Endothelial cell of umbilical vein (primary cell): ENCODE measurements at regions of chr3 and their contacts with region 1.

Region 1: DNA sequence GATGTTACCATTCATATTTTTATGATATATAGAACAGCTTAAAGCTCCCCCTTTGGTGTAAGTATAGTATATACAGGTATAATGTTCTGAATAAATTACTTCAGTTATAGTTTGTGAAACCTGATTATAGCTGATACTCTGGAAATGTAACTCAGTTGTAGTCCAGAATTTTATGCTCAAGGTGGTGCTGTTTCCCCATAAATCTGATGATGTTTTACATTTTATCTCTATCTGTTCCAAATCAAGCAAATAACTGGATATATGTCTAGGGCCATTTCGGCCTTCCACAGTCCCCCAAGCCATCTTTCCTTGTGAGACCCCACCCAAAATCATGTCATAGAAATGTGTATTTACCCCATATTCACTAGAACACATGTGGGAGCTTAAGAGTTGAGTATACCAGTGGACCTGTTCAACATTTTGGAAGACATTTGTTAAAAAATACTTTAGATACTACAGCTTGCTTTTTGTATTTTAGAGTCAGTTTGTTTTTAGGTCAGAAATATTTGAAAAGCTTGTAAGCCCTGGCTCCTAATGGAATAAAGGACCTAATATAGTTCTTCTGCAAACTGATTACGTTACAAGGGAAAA is 107.1 kb downstream of the ATG7 start:
- DNase-seq: peak; percentile 90
- H3K4me3 ChIP-seq: peak overlapping the region in 2 of 3 experiments; percentile 24 to 43
- H3K27ac ChIP-seq: peak overlapping the region; percentile 98
- H3K4me1 ChIP-seq: peaks cover 21% of the 10 kb centered on the region
- H3K27me3 ChIP-seq: no peaks in the 10 kb centered on the region
- CTCF ChIP-seq: peak; percentile 28 to 43
- POLR2A ChIP-seq: no peak

Region 2: GRCh38 chr3:11392014-11392859 is 12.9 kb after region 1 on chr3:
- CTCF ChIA-PET with region 1: interaction called, 21 read pairs
- POLR2A ChIA-PET with region 1: interaction called, 7 read pairs
- dilution Hi-C with region 1: no loop called
- intact Hi-C with region 1: no loop called
- DNase-seq: peak; percentile 42
- H3K4me3 ChIP-seq: no peak overlapping the region
- H3K27ac ChIP-seq: peak overlapping the region; percentile 16
- H3K4me1 ChIP-seq: peaks cover 19% of the 10 kb centered on the region
- H3K27me3 ChIP-seq: no peaks in the 10 kb centered on the region
- CTCF ChIP-seq: no peak
- POLR2A ChIP-seq: no peak

Region 3: GRCh38 chr3:11548721-11549131 is 169.4 kb after region 1 on chr3:
- CTCF ChIA-PET with region 1: interaction called, 19 read pairs
- POLR2A ChIA-PET with region 1: no interaction called
- dilution Hi-C with region 1: no loop called
- intact Hi-C with region 1: loop called (anchors 1 kb)
- DNase-seq: peak; percentile 85
- H3K4me3 ChIP-seq: no peak overlapping the region
- H3K27ac ChIP-seq: peak overlapping the region; percentile 39
- H3K4me1 ChIP-seq: peaks cover 16% of the 10 kb centered on the region
- H3K27me3 ChIP-seq: no peaks in the 10 kb centered on the region
- CTCF ChIP-seq: no peak
- POLR2A ChIP-seq: no peak

Region 4: DNA sequence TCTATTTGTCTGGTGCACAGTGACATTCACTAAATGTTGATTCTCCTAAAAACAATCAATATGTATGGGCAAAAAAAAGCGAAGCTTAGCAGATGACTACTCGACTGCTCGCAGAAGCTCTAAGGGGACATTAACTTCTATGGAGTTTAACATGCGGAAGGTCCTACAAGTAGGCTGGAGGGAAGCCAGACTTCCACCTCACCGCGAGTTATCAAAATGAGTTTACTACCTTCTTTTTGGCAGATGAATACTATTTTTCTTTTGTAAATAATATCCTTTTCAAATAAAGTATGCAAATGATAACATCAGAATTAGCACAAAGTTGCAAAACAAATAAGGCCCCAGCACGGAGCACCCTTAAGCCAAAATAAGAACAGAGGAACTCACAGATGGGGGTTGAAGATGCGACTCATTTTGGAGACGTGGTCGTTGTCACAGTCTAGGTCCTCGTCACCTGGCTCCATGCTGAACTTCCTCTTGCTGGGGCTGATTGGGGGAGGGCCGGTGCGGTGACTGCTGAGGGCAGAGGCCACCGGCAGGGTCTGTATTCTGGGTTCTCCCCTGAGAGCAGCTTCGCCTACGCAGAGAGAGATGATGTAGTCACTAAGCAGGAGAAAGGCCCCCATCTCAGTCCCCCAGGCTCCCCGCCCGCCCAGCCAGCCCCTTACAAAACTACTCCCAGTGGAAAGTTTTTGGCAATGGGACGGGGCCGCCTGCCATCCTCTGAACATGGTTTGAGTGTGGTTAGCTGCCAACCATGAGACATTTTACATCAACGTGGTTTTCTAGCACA is 222.3 kb after region 1 on chr3:
- CTCF ChIA-PET with region 1: interaction called, 7 read pairs
- POLR2A ChIA-PET with region 1: no interaction called
- dilution Hi-C with region 1: no loop called
- intact Hi-C with region 1: loop called (anchors 1 kb)
- DNase-seq: no peak
- H3K4me3 ChIP-seq: no peak overlapping the region
- H3K27ac ChIP-seq: peak overlapping the region; percentile 64
- H3K4me1 ChIP-seq: peaks cover 23% of the 10 kb centered on the region
- H3K27me3 ChIP-seq: no peaks in the 10 kb centered on the region
- CTCF ChIP-seq: no peak
- POLR2A ChIP-seq: no peak

Region 5: GRCh38 chr3:11719406-11720230 is 340.3 kb after region 1 on chr3:
- CTCF ChIA-PET with region 1: interaction called, 15 read pairs
- POLR2A ChIA-PET with region 1: no interaction called
- dilution Hi-C with region 1: no loop called
- intact Hi-C with region 1: loop called (anchors 1 kb)
- DNase-seq: peak; percentile 66
- H3K4me3 ChIP-seq: peak overlapping the region; percentile 92 to 96 (median 93)
- H3K27ac ChIP-seq: peak overlapping the region; percentile 76
- H3K4me1 ChIP-seq: peaks cover 21% of the 10 kb centered on the region
- H3K27me3 ChIP-seq: peaks cover under 1 to 9% of the 10 kb centered on the region in 2 experiments
- CTCF ChIP-seq: no peak
- POLR2A ChIP-seq: no peak

Region 6: DNA sequence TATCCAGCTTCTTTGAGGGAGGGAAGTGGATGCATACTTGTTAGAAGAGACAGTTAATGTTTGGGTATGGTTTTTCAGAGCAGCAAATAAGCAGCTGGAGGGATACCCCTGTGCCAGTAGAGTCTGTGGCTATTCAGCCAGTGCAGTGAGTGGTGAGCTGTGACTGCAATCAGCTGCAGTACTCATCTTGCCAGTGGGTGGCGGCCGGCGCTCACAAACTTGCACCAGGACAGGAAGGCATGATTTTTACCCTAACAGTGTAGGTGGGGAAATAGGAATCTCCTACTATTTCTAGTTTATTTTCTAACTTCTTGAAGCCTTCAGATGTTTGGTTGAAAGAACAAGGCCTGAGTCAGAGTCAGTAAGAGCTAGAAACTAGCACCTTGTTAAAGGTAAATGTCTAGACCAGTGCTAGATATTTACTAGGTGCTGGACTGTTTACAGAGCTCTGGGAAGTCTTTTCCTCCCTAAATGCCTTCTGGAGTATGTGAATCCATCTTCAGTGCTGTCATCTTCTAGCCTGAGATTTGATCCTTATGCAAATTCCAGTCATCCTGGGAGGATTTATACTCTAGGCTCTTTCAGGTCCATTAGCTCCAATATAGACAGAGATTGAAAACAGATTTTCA is 755.8 kb after region 1 on chr3:
- CTCF ChIA-PET with region 1: interaction called, 13 read pairs
- POLR2A ChIA-PET with region 1: no interaction called
- dilution Hi-C with region 1: no loop called
- intact Hi-C with region 1: loop called (anchors 5 kb)
- DNase-seq: peak; percentile 61
- H3K4me3 ChIP-seq: no peak overlapping the region
- H3K27ac ChIP-seq: no peak overlapping the region
- H3K4me1 ChIP-seq: no peaks in the 10 kb centered on the region
- H3K27me3 ChIP-seq: peaks cover 21 to 32% of the 10 kb centered on the region in 2 experiments
- CTCF ChIP-seq: peak; percentile 84 to 90
- POLR2A ChIP-seq: no peak